Left colon (tissue), 2 donors: ENCODE measurements at regions of chr19 and their contacts with region 1.

Region 1: GRCh38 chr19:47243776-47244547 is 12.4 kb upstream of the CCDC9 start:
- DNase-seq: peak; percentile 89 to 93
- ATAC-seq: peak; percentile 88

Region 2: GRCh38 chr19:47143322-47144073 is 100.5 kb before region 1 on chr19:
- intact Hi-C with region 1: loop called in 1 of 2 experiments (anchors 10 kb)
- DNase-seq: peak in 1 of 2 donors; percentile 47
- ATAC-seq: no peak

Region 3: DNA sequence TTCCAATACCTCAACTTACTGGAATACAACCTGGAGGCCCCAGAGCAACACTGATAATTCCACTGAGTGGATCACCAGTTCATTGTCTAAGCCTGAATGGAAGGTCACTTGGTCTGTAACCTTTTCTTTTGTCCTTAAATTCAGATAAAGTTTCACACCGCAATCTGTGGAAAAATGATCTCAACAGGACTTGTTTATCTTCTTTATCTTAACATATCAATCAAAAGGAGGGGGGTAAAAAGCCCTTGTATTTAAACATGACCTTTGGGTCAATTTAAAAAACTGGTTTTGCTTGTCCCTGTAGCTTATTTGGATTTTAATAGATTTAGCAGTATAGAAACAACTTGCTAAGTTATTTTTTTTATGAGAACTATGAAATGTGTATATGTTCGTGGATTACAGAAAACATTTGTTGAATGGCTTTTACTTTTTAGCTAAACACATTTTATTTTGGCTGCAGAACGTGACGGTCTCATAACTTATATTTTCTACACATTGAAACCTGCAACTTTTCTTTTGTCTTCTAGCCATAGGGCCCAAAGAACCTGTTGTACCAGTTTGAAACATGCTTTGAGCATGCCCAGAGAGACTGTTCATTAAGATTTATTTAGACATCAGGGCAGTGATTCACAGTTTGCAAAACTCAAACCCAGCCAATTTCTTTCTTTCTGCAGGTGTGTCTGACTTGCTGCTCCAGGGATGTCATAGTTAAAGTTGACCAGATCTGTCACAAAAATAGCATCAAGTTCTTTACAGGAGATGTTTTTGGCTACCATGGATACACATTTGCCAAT is 91.5 kb before region 1 on chr19:
- intact Hi-C with region 1: loop called (anchors 5 to 10 kb)
- DNase-seq: no peak
- ATAC-seq: peak; percentile 60

Region 4: DNA sequence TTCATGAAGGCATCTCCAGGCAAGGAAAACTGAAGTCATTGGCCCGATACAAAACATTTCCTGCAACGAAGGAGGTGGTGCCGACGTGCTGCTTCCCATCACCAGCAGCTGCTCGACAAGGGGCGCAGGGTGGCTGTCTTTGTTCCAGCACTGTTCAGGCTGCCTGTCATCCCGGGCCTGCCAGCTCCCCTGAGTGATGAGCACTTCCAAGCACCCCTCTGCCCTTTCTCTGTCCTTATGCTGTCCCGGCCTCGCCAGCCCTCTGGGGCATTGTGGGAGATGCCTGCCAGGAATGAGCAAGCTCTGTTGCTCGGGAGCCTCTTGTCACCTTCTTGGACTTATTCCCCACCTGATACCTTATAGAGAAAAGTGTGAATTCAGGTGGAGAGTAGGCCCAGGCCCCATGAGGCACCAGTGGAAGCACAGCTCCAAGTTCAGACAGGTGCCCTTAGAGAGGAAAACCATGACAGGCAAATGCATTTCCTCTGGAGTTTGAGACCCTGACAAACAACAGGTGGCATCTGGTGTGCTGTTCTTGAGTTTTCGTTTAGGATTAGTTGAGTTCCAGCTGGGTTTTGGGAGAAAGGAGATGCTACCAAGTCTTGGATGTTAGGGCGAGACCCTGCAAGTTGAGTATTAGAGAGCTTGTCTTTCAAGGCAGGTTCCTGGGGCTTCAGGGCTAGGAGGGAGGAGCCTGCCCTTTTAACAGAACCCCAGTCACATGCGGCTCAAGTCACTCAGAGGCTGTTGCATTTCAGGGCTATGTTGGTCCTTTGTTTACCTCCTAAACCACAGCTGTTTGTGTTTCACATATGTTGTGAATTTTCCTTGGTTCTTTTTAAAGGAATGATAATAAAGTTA is 34.4 kb before region 1 on chr19:
- intact Hi-C with region 1: loop called in 1 of 2 experiments (anchors 5 kb)
- DNase-seq: no peak
- ATAC-seq: no peak